ENCODE measurements at regions of chr1 and their contacts with region 1.

Region 1: GRCh38 chr1:36187800-36188593 is 32.0 kb downstream of the MAP7D1 start:
- DNase-seq: peak; percentile 87
- H3K4me3 ChIP-seq: no peak overlapping the region
- H3K27ac ChIP-seq: peak overlapping the region; percentile 67
- H3K4me1 ChIP-seq: peaks cover 6% of the 10 kb centered on the region
- H3K27me3 ChIP-seq: no peaks in the 10 kb centered on the region
- CTCF ChIP-seq: peak; percentile 81

Region 2: DNA sequence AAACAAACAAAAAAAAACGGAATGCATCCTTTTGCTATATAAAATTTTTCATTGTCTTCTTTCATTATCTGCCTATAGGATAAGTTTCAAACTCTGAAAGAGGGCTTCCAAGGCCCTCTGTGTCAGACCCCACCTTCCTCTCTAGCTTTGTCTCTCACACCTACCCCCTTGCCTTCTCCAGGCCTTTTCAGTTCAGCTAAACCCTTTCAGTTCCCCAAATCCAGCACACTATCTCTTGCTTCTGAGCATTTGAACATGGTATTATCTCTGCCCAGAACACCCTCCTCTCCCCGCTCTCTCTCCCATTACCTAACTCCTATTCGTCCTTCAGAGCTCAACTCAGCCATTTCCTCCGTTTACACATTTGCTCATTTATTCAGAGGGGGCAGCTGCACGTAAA is 505.0 kb before region 1 on chr1:
- intact Hi-C with region 1: no loop called
- DNase-seq: no peak
- H3K4me3 ChIP-seq: no peak overlapping the region
- H3K27ac ChIP-seq: no peak overlapping the region
- H3K4me1 ChIP-seq: no peaks in the 10 kb centered on the region
- H3K27me3 ChIP-seq: no peaks in the 10 kb centered on the region
- CTCF ChIP-seq: no peak

Region 3: GRCh38 chr1:36099681-36100341 is 88.2 kb before region 1 on chr1:
- intact Hi-C with region 1: loop called (anchors 5 kb)
- DNase-seq: peak; percentile 82
- H3K4me3 ChIP-seq: no peak overlapping the region
- H3K27ac ChIP-seq: no peak overlapping the region
- H3K4me1 ChIP-seq: no peaks in the 10 kb centered on the region
- H3K27me3 ChIP-seq: no peaks in the 10 kb centered on the region
- CTCF ChIP-seq: peak; percentile 87

Region 4: DNA sequence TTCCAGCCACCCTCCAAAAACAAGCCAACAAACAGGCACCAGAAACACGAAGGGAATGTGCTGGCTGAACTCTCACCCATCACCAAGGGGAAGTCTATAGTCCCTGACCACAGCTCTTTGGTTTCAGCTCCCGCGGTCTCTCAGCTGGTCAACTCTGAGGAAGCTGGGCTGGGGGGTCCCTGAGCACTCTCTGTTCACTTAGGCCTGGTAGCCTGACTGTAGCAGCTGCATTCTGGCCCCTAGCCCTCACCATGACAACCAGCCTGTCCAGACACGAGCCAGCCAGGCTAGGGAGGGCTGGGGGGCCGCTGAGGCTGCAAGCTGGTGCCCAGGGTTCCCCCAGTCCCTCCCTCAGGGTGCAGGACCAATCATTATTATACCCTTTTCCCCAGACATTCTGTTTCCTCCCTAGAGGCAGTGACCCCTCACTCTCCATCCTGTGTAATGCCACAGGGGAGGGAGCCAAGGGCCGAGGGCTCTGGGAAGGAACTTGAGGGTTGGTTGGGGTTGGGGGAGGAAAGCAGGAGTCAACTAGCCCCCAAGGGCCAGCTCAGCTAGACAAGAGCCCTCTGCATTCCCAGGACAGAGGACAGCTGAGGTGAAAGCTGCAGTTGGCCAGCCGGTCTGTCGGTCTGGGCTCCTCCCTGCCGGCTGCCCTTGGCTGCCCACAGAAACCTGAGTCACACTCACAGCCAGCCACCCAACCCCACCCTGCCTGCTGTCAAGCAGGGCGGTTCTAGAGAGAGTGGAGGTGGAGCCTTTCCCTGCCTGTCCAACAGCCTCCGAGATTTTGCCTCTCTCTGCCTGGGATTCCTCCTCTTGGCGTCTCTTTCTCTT is 37.5 kb before region 1 on chr1:
- intact Hi-C with region 1: loop called (anchors 5 kb)
- DNase-seq: peak; percentile 93
- H3K4me3 ChIP-seq: peak overlapping the region; percentile 1
- H3K27ac ChIP-seq: peak overlapping the region; percentile 94
- H3K4me1 ChIP-seq: peaks cover 16% of the 10 kb centered on the region
- H3K27me3 ChIP-seq: no peaks in the 10 kb centered on the region
- CTCF ChIP-seq: no peak

Measured in colonic mucosa (tissue), 4 donors.